GM12878 (cell line): ENCODE measurements at regions of chr12 and their contacts with region 1.

Region 1: DNA sequence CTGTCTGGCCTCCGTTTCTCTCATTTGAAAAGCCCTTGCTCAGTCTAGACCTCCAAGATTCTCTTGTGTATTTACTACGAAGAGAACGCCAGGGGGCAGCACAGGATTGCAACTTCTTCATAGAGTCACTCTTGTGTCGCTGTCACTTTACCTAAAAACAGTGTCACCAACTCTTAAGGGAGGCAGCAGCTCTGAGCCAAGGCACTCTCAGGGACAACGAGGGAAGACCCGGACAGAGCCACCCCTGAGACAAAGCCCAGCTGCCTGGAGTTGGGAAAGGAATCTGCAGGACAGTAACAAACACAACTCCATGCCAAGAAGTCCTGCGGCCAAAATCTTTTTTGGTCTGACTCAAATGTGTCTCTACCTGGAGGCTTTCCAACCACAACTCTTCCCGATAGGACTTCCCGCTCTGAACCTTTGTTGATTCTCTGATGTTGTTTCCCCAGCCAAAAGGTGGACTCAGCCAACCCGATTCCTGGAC is 9.6 kb upstream of the RPAP3 start:
- DNase-seq: no peak
- ATAC-seq: peak; percentile 92
- H3K4me3 ChIP-seq: no peak overlapping the region
- H3K27ac ChIP-seq: no peak overlapping the region
- H3K4me1 ChIP-seq: no peaks in the 10 kb centered on the region
- H3K27me3 ChIP-seq: no peaks in the 10 kb centered on the region
- CTCF ChIP-seq: peak; percentile 65 to 88 (median 75); a peak in 5 of 6 replicates
- EP300 ChIP-seq: no peak
- POLR2A ChIP-seq: no peak
- RAD21 ChIP-seq: peak; percentile 92

Region 2: DNA sequence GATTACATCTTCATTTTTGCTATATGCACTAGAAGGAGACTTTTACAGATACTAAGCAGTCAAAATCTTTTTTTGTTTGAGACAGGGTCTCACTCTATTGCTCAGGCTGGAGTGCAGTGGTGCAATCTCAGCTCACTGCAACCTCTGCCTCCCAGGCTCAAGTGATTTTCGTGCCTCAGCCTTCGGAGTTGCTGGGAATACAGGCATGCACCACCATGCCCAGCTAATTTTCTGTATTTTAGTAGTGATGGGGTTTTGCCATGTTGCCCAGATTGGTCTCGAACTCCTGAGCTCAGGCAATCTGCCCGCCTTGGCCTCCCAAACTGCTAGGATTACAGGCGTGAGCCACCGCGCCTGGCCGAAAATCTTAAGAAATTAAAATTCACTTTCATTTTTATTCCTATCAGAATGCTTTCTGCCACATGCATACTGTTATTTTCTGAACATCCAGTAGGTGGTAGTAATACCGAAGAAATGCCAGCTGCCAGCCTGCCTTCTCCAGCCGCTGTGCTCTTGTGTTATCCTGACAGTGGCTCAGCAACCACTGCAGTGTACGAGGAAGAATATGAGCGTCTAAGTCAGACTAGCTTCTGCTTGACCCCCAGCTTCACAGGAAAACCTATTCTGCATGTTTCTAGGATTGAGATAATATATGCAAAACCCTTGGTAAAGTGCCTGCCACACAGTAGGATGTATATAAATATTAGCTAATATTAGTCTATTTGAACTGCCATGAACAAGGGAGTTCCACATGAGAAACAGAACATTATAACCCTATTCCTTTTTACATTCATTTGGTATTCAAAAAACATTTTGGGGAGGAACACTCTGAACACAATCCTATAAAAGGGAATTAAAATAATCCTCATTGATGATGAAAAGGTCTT is 63.8 kb before region 1 on chr12:
- CTCF ChIA-PET with region 1: interaction called, 10 read pairs
- POLR2A ChIA-PET with region 1: no interaction called
- RAD21 ChIA-PET with region 1: no interaction called
- SMC1A ChIA-PET with region 1: interaction called, 3 read pairs
- in situ Hi-C with region 1: no loop called
- intact Hi-C with region 1: loop called (anchors 2 kb)
- DNase-seq: peak; percentile 23
- ATAC-seq: peak; percentile 96
- H3K4me3 ChIP-seq: no peak overlapping the region
- H3K27ac ChIP-seq: no peak overlapping the region
- H3K4me1 ChIP-seq: peaks cover 13% of the 10 kb centered on the region
- H3K27me3 ChIP-seq: no peaks in the 10 kb centered on the region
- CTCF ChIP-seq: peak; percentile 57 to 72 (median 67)
- EP300 ChIP-seq: no peak
- POLR2A ChIP-seq: no peak
- RAD21 ChIP-seq: peak; percentile 67

Region 3: DNA sequence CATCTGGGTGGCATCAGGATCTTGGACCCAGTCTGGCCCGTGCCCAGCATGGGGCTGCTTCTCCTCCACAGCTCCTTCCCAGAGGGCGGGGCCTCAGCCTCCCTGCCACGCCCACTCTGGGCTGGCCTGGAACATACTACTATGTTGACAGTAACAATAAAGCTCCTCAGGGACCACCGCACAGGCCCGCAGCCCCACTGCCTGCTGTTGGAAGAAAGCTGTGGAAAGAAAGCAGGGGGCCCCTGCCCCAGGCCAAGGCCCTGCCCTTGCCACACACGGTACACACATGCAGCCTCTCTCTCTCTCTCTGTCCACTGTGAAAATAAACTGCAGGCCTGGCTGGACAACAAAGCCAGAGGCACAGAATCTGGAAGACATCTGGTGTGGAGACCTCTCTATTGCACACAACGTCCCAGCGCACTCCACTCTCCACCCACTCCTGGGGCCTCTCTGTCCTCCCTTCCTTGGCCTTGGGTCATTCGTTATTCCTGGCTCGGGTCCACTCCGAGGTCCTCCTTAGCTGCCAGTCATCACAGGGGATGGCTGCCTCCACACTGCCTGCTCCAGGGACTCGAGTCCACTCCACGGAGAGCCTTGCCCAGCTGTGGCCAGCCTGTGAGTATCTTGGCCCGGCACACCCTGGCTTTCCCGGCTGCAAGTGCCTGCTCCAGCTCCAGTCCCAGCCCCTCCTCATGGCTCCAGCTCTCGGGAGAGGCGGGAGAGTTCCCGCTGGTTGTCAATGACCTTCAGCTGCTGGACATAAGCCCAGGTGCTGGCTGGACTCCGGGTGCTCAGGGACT is 21.6 kb after region 1 on chr12:
- CTCF ChIA-PET with region 1: interaction called, 151 read pairs
- POLR2A ChIA-PET with region 1: interaction called, 3 read pairs
- RAD21 ChIA-PET with region 1: interaction called, 61 read pairs
- SMC1A ChIA-PET with region 1: interaction called, 129 read pairs
- in situ Hi-C with region 1: no loop called
- intact Hi-C with region 1: loop called (anchors 1 kb)
- DNase-seq: no peak
- ATAC-seq: no peak
- H3K4me3 ChIP-seq: no peak overlapping the region
- H3K27ac ChIP-seq: no peak overlapping the region
- H3K4me1 ChIP-seq: peaks cover 25% of the 10 kb centered on the region
- H3K27me3 ChIP-seq: no peaks in the 10 kb centered on the region
- CTCF ChIP-seq: no peak
- EP300 ChIP-seq: no peak
- POLR2A ChIP-seq: no peak
- RAD21 ChIP-seq: no peak

Region 4: GRCh38 chr12:47767216-47767724 is 51.8 kb after region 1 on chr12:
- CTCF ChIA-PET with region 1: interaction called, 104 read pairs
- POLR2A ChIA-PET with region 1: no interaction called
- RAD21 ChIA-PET with region 1: interaction called, 40 read pairs
- SMC1A ChIA-PET with region 1: interaction called, 27 read pairs
- in situ Hi-C with region 1: no loop called
- intact Hi-C with region 1: loop called (anchors 1 kb)
- DNase-seq: no peak
- ATAC-seq: peak; percentile 89
- H3K4me3 ChIP-seq: no peak overlapping the region
- H3K27ac ChIP-seq: no peak overlapping the region
- H3K4me1 ChIP-seq: no peaks in the 10 kb centered on the region
- H3K27me3 ChIP-seq: no peaks in the 10 kb centered on the region
- CTCF ChIP-seq: peak; percentile 68 to 87 (median 73)
- EP300 ChIP-seq: no peak
- POLR2A ChIP-seq: no peak
- RAD21 ChIP-seq: peak; percentile 92

Region 5: DNA sequence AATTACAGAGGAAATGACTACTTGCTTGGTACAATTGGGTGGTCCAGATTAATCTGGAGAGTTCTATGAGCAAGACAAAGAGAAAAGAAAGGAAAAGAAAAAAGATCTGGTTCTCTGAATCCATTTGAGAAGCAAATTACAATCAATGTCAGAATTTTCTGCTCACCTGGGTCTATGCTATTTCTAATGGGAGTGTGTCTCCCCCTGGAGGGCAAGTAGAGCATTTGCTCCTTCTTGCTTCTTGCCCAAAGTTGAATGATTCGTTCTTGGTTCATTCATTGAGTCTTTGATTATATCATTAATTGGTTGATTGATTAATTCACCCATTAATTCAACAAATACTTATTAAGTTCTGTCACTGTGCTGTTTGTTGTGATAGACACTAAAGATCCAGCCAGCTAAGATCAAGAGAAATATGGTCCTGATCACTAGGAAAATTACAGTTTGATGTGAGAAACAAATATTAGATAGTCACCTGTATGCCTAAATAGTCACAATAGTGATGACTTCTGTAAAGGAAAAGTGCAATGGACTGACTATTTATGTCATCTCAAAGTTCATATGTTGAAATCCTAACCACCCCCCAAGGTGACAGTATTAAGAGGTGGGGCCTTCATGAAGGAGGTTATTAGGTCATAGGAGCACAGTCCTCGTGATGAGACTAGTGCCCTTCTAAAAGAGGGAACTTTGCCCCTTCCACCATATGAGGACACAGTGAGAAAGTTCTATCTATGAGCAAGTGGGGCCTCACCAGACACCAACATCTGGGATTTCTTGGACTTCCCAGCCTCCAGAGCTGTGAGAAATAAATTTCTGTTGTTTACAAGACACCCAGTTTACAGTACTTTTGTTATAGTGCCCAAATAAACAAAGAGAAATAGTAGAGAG is 449.9 kb after region 1 on chr12:
- CTCF ChIA-PET with region 1: no interaction called
- POLR2A ChIA-PET with region 1: no interaction called
- RAD21 ChIA-PET with region 1: no interaction called
- SMC1A ChIA-PET with region 1: interaction called, 3 read pairs
- in situ Hi-C with region 1: loop called (anchors 5 kb)
- intact Hi-C with region 1: loop called (anchors 5 kb)
- DNase-seq: peak; percentile 45
- ATAC-seq: peak; percentile 82
- H3K4me3 ChIP-seq: no peak overlapping the region
- H3K27ac ChIP-seq: no peak overlapping the region
- H3K4me1 ChIP-seq: peaks cover 4% of the 10 kb centered on the region; the same call in 1 of the 2 replicates
- H3K27me3 ChIP-seq: peaks cover 0 to 2% of the 10 kb centered on the region in 2 experiments; a peak in 2 of 4 replicates
- CTCF ChIP-seq: peak; percentile 89 to 94 (median 93)
- EP300 ChIP-seq: no peak
- POLR2A ChIP-seq: no peak
- RAD21 ChIP-seq: peak; percentile 92